ENCODE measurements at regions of chr2 and their contacts with region 1.

Region 1: DNA sequence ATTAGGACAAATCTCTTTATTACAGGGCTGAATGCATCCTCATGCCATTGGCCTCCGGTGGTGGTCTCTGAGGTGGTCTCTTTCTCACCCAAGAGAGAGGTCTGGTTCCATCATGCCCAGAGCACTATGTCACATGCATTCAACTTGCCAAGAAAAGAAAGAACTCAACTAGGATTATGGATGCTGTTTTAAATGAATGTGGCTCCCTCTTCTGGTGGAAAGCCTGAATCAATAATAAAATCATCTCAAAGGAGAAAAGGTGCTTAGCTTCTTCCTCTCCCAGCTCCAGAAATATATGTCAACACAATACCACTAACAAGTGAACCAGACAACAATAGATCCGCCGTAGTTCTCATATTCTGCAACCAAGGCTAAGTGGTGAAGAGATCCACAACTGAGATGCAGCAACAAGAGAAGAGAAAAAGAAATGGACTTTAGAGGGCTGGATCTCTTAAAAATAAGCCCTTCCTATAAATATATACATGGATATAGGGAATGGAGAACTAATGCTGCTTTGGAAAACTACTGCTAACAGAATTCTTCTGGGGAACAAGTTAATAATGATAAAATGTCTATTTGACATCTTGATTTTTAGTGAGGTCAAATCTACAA is 396.8 kb downstream of the NCKAP5 start:
- DNase-seq: no peak
- H3K4me3 ChIP-seq: no peak overlapping the region
- H3K27ac ChIP-seq: no peak overlapping the region
- H3K27me3 ChIP-seq: no peaks in the 10 kb centered on the region
- CTCF ChIP-seq: peak; percentile 50 to 81 (median 68)

Region 2: DNA sequence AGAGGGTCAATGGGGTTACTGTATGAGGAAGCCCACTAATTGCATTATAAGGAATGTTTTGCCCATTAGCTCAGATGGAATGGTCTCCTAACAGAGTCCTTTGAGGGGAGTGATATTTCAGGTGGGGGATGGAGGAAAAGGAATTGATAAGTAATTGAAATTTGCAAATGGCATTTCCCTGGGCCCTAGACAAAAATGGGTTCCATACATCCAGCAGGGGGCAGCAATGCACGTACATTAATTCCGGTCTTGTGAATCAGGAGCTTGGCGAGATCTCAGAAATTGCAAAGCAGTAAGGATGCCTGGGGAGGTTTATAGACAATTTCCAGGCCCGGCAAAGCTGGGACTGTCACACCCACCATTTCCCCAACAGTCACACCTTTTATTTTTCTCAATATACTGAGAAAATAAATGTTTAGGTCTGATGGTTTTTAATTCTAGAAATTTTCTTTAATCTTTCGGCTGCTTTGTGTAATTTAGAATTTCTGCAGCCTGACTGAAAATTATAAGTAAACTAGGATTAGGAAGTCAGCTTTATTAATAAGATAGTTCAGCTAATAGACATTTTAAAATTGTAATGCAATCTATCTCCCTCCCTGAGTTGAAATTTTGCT is 624.3 kb before region 1 on chr2:
- intact Hi-C with region 1: loop called (anchors 2 to 10 kb)
- DNase-seq: peak; percentile 46 to 89 (median 70)
- H3K4me3 ChIP-seq: no peak overlapping the region
- H3K27ac ChIP-seq: no peak overlapping the region
- H3K27me3 ChIP-seq: peaks cover 0 to 4% (median 0%) of the 10 kb centered on the region in 45 donors
- CTCF ChIP-seq: peak; percentile 73 to 92 (median 83)

Region 3: DNA sequence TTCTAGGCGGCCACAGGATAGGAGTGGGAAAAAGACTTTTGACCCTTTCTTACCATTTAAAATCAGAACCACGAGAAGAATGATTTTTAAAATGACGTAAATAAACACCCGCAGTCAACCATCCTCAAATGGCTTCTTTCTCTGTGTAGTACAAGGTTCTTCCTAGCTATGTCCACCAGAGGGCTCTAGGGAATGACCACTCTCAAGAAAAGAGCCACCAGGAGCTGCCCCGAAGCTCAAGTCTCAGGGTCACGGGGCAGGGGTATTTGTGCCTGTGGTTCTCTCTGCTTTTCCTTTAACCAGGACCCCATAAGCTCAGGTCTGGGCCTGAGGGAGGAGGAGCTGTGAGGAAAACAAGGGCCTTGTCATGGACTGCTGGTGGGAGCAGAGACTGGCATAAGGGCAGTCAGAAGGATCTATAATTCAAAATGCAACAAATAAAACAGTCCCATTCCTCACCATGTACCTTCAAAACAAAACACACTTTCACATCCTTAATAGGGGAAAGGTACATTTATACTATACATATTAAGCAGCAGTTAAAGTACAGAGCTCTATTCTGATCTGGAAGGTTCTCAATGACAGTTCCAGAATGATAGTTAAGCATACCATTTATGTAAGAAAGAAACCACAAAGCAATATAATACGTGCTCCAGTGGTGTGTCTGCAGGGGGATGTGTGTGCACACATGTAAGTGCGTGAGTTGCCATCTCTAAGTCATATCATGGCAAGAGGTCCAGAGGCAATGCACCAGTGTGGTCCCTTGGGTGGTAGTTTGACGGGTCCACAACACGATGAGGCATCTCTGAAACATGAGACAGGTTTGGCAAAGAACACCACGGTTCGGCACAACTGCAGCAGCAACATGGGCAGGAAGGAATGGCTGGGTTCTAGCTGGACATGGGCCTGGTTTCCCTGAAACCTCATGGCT is 520.1 kb before region 1 on chr2:
- intact Hi-C with region 1: loop called in 1 of 2 experiments (anchors 5 kb)
- DNase-seq: no peak
- H3K4me3 ChIP-seq: peak overlapping the region in 7 of 59 donors; percentile 9 to 43 (median 29)
- H3K27ac ChIP-seq: no peak overlapping the region
- H3K27me3 ChIP-seq: peaks cover 0 to 4% (median 0%) of the 10 kb centered on the region in 45 donors
- CTCF ChIP-seq: peak in 43 of 56 donors; percentile 38 to 87 (median 64)

Region 4: GRCh38 chr2:132670496-132671150 is 500.9 kb before region 1 on chr2:
- intact Hi-C with region 1: loop called (anchors 5 to 10 kb)
- DNase-seq: peak in 7 of 10 donors; percentile 4 to 53 (median 43)
- H3K4me3 ChIP-seq: peak overlapping the region; percentile 42 to 80 (median 64)
- H3K27ac ChIP-seq: peak overlapping the region in 23 of 59 donors; percentile 3 to 72 (median 30)
- H3K27me3 ChIP-seq: peaks cover 0 to 37% (median 19%) of the 10 kb centered on the region in 45 donors
- CTCF ChIP-seq: peak in 7 of 56 donors; percentile 3 to 21 (median 10)

Region 5: GRCh38 chr2:132837764-132838163 is 333.7 kb before region 1 on chr2:
- intact Hi-C with region 1: no loop called
- DNase-seq: no peak
- H3K4me3 ChIP-seq: no peak overlapping the region
- H3K27ac ChIP-seq: no peak overlapping the region
- H3K27me3 ChIP-seq: no peaks in the 10 kb centered on the region
- CTCF ChIP-seq: no peak

Region 6: GRCh38 chr2:133213651-133214050 is 42.2 kb after region 1 on chr2:
- intact Hi-C with region 1: no loop called
- DNase-seq: no peak
- H3K4me3 ChIP-seq: no peak overlapping the region
- H3K27ac ChIP-seq: no peak overlapping the region
- H3K27me3 ChIP-seq: no peaks in the 10 kb centered on the region
- CTCF ChIP-seq: no peak

Region 7: DNA sequence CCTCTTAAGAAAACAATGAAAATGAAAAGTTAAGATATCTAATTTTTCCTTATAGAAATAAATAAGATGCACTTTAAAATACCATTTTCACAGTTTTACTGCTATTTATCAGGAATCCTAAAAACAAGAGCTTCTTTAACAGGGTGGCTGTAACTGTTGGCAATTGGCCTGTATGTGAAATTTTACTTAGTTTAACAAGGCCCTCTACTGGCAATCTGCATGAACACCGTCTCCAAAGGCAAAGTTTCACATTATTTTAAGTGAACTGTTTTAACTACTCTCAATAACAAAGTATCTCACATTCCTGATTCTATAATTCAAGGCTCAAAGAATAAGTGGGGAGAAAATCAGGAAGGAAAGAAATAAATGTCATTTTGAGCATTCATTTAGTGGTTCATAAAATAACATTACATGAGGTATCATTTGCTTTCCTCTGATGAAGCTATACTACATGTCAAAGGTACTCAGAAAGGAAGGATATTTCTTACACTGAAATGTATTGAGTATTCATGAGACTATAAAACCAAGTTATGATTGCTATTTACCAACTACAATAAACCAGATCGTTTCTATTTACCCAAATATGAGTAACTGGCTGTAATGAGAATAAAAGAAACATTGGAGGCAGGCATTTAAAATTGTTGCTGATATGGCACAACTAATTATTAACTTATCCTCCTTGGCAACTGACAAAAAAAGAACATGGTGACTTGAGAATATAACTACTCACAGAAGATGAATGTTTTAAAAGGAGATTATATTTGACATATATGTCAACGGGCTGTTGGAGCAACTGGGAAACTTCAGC is 389.8 kb after region 1 on chr2:
- intact Hi-C with region 1: loop called in 1 of 2 experiments (anchors 10 kb)
- DNase-seq: peak in 1 of 10 donors; percentile 36
- H3K4me3 ChIP-seq: no peak overlapping the region
- H3K27ac ChIP-seq: peak overlapping the region in 7 of 59 donors; percentile 4 to 44 (median 25)
- H3K27me3 ChIP-seq: peaks cover 0 to 10% (median 0%) of the 10 kb centered on the region in 45 donors
- CTCF ChIP-seq: peak; percentile 27 to 95 (median 79)

Region 8: GRCh38 chr2:133844214-133844892 is 672.9 kb after region 1 on chr2:
- intact Hi-C with region 1: loop called in 1 of 2 experiments (anchors 10 kb)
- DNase-seq: peak; percentile 54 to 81 (median 64)
- H3K4me3 ChIP-seq: no peak overlapping the region
- H3K27ac ChIP-seq: no peak overlapping the region
- H3K27me3 ChIP-seq: no peaks in the 10 kb centered on the region
- CTCF ChIP-seq: peak; percentile 58 to 93 (median 85)

Measured in dorsolateral prefrontal cortex (tissue), 120 donors.